Endothelial cell of umbilical vein (primary cell): ENCODE measurements at regions of chr15 and their contacts with region 1.

Region 1: GRCh38 chr15:61227269-61227949 is 1.7 kb downstream of the RORA start:
- DNase-seq: peak; percentile 41
- H3K4me3 ChIP-seq: peak overlapping the region; percentile 53 to 84 (median 72)
- H3K27ac ChIP-seq: no peak overlapping the region
- H3K4me1 ChIP-seq: peaks cover 9% of the 10 kb centered on the region
- H3K27me3 ChIP-seq: peaks cover 25 to 28% of the 10 kb centered on the region in 2 experiments
- CTCF ChIP-seq: no peak
- POLR2A ChIP-seq: no peak

Region 2: GRCh38 chr15:61169904-61170695 is 57.3 kb before region 1 on chr15:
- CTCF ChIA-PET with region 1: no interaction called
- POLR2A ChIA-PET with region 1: no interaction called
- dilution Hi-C with region 1: no loop called
- intact Hi-C with region 1: loop called (anchors 5 kb)
- DNase-seq: no peak
- H3K4me3 ChIP-seq: no peak overlapping the region
- H3K27ac ChIP-seq: no peak overlapping the region
- H3K4me1 ChIP-seq: peaks cover 13% of the 10 kb centered on the region
- H3K27me3 ChIP-seq: no peaks in the 10 kb centered on the region
- CTCF ChIP-seq: no peak
- POLR2A ChIP-seq: no peak

Region 3: GRCh38 chr15:61205346-61205921 is 22.0 kb before region 1 on chr15:
- CTCF ChIA-PET with region 1: interaction called, 8 read pairs
- POLR2A ChIA-PET with region 1: no interaction called
- dilution Hi-C with region 1: no loop called
- intact Hi-C with region 1: loop called (anchors 1 kb)
- DNase-seq: peak; percentile 38
- H3K4me3 ChIP-seq: peak overlapping the region in 2 of 3 experiments; percentile 13 to 41
- H3K27ac ChIP-seq: peak overlapping the region; percentile 2
- H3K4me1 ChIP-seq: peaks cover 13% of the 10 kb centered on the region
- H3K27me3 ChIP-seq: no peaks in the 10 kb centered on the region
- CTCF ChIP-seq: no peak
- POLR2A ChIP-seq: no peak

Region 4: DNA sequence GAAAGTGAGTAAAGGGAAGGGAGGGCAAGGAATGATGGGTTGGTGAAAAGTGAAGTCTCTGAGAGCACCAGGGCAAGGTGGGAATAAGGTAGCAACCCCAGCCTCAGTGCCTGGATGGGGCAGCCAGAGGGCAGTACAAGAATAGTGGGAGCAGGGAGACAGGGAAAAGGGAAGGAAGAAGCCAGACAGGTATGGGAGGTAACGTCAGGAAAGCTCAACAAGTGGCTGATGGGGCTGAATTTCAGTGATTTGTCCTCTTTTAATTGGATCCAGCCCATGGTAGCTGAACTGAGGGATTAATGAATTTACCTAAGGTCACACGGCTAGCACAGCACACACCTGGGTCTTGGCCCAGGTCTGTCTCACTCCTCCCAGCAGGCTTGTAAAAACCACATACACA is 10.9 kb before region 1 on chr15:
- CTCF ChIA-PET with region 1: interaction called, 17 read pairs
- POLR2A ChIA-PET with region 1: interaction called, 6 read pairs
- dilution Hi-C with region 1: no loop called
- intact Hi-C with region 1: no loop called
- DNase-seq: no peak
- H3K4me3 ChIP-seq: no peak overlapping the region
- H3K27ac ChIP-seq: no peak overlapping the region
- H3K4me1 ChIP-seq: peaks cover 2% of the 10 kb centered on the region
- H3K27me3 ChIP-seq: no peaks in the 10 kb centered on the region
- CTCF ChIP-seq: no peak
- POLR2A ChIP-seq: no peak